Motor neuron (in vitro differentiated cells): ENCODE measurements at regions of chr6 and their contacts with region 1.

Region 1: GRCh38 chr6:36187446-36187845 is 9.1 kb upstream of the BRPF3 start:
- ATAC-seq: no peak
- H3K4me3 ChIP-seq: no peak overlapping the region
- H3K27ac ChIP-seq: no peak overlapping the region
- H3K4me1 ChIP-seq: no peaks in the 10 kb centered on the region

Region 2: GRCh38 chr6:36131511-36132245 is 55.8 kb before region 1 on chr6:
- in situ Hi-C with region 1: loop called in 1 of 9 experiments (anchors 10 kb)
- ATAC-seq: peak; percentile 32 to 91 (median 82)
- H3K4me3 ChIP-seq: no peak overlapping the region
- H3K27ac ChIP-seq: peak overlapping the region; percentile 27 to 35
- H3K4me1 ChIP-seq: peaks cover 35 to 38% of the 10 kb centered on the region in 2 donors